Calu3 (cell line): ENCODE measurements at regions of chr11 and their contacts with region 1.

Region 1: DNA sequence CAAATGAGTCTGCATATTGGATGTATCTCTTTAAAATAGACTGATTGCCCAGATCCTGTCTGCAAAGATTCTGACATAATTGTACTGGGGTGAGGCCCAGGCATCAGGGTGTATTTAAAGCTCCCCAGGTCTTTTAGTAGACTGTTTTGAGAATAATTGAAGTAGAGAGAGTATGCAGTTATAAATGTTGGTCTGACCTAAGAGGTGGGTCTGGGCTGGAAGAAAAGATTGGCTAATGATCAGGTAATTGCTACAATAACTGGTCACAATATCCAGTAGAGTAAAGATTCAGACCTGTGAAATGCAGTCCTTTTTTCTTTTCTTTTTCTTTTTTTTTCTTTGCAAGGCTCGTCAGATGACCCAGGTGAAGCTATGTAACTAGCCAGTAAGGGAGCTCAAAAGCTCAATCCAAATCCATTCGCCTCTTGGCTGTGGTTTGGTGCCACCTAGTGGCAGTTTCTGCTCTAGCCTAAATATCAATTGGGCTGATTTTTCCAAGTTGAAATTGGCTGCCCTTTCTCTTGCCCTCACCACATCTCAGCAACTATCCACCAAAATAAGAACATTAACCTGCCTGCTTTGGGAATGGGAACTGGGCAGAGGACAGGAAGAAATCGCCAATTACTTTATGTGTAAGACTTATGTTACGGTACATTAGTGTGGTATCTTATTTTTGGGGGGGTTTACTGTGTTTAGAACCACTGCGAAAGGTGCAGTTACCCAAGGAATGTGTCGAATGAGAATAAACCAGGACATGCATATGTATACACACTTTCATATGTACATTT is 45.9 kb downstream of the ZNF143 start:
- DNase-seq: peak; percentile 81
- H3K4me3 Mint-ChIP-seq: no peak overlapping the region
- H3K27ac Mint-ChIP-seq: peak overlapping the region; percentile 47
- H3K4me1 Mint-ChIP-seq: peaks cover 23% of the 10 kb centered on the region
- H3K27me3 Mint-ChIP-seq: no peaks in the 10 kb centered on the region
- CTCF ChIP-seq: peak; percentile 56

Region 2: GRCh38 chr11:9169595-9170295 is 336.9 kb before region 1 on chr11:
- CTCF ChIA-PET with region 1: interaction called, 4 read pairs
- intact Hi-C with region 1: loop called (anchors 5 kb)
- DNase-seq: no peak
- H3K4me3 Mint-ChIP-seq: no peak overlapping the region
- H3K27ac Mint-ChIP-seq: no peak overlapping the region
- H3K4me1 Mint-ChIP-seq: no peaks in the 10 kb centered on the region
- H3K27me3 Mint-ChIP-seq: no peaks in the 10 kb centered on the region
- CTCF ChIP-seq: no peak

Region 3: GRCh38 chr11:9265211-9266131 is 241.2 kb before region 1 on chr11 and contains the start of gene DENND5A:
- CTCF ChIA-PET with region 1: no interaction called
- intact Hi-C with region 1: no loop called
- DNase-seq: peak; percentile 68
- H3K4me3 Mint-ChIP-seq: peak within 1 kb of the TSS; percentile 88
- H3K27ac Mint-ChIP-seq: peak within 1 kb of the TSS; percentile 88
- H3K4me1 Mint-ChIP-seq: peaks cover 17% of the 10 kb centered on the region
- H3K27me3 Mint-ChIP-seq: no peaks in the 10 kb centered on the region
- CTCF ChIP-seq: no peak
- total RNA-seq, gene DENND5A: 31.6 and 40.0 TPM in 2 replicates

Region 4: DNA sequence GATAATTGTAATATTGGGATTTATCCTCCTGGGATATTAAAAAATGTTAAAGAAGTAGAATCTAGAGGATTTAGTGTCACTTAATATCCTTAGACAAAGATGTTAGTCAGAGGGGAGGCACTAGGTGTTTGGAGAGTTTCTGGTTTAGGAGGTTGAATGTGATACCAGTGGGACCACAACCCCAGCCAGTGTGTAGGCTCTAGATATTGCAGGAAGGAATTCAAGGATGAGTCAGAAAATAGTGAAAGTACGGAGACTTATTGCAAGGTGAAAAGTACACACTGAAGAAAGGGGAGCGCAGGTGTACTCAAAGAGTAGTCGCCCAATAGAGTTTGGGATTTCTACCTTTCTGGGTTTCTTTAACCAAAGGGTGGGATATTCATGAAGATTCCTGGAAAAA is 186.6 kb before region 1 on chr11:
- CTCF ChIA-PET with region 1: no interaction called
- intact Hi-C with region 1: no loop called
- DNase-seq: no peak
- H3K4me3 Mint-ChIP-seq: no peak overlapping the region
- H3K27ac Mint-ChIP-seq: no peak overlapping the region
- H3K4me1 Mint-ChIP-seq: peaks cover 26% of the 10 kb centered on the region
- H3K27me3 Mint-ChIP-seq: no peaks in the 10 kb centered on the region
- CTCF ChIP-seq: no peak

Region 5: GRCh38 chr11:9568854-9569587 is 62.3 kb after region 1 on chr11:
- CTCF ChIA-PET with region 1: interaction called, 6 read pairs
- intact Hi-C with region 1: loop called (anchors 2 kb)
- DNase-seq: peak; percentile 74
- H3K4me3 Mint-ChIP-seq: peak overlapping the region; percentile 65
- H3K27ac Mint-ChIP-seq: peak overlapping the region; percentile 100
- H3K4me1 Mint-ChIP-seq: peaks cover 68% of the 10 kb centered on the region
- H3K27me3 Mint-ChIP-seq: no peaks in the 10 kb centered on the region
- CTCF ChIP-seq: no peak